ENCODE measurements at regions of chrX and their contacts with region 1.

Region 1: GRCh38 chrX:40083120-40083978 is 14.4 kb downstream of the BCOR start:
- DNase-seq: no peak
- ATAC-seq: peak; percentile 37
- H3K4me3 ChIP-seq: peak overlapping the region; percentile 3 to 16; a peak in 1 of 4 replicates
- H3K27ac ChIP-seq: no peak overlapping the region
- H3K4me1 ChIP-seq: peaks cover 42% of the 10 kb centered on the region
- H3K27me3 ChIP-seq: no peaks in the 10 kb centered on the region
- CTCF ChIP-seq: no peak

Region 2: GRCh38 chrX:38552721-38553120 is 1530.6 kb before region 1 on chrX:
- CTCF ChIA-PET with region 1: no interaction called
- POLR2A ChIA-PET with region 1: no interaction called
- in situ Hi-C with region 1: no loop called
- intact Hi-C with region 1: no loop called
- DNase-seq: no peak
- ATAC-seq: no peak
- H3K4me3 ChIP-seq: no peak overlapping the region
- H3K27ac ChIP-seq: no peak overlapping the region
- H3K4me1 ChIP-seq: no peaks in the 10 kb centered on the region
- H3K27me3 ChIP-seq: no peaks in the 10 kb centered on the region
- CTCF ChIP-seq: no peak

Region 3: GRCh38 chrX:38578167-38578566 is 1505.2 kb before region 1 on chrX:
- CTCF ChIA-PET with region 1: no interaction called
- POLR2A ChIA-PET with region 1: no interaction called
- in situ Hi-C with region 1: no loop called
- intact Hi-C with region 1: no loop called
- DNase-seq: no peak
- ATAC-seq: no peak
- H3K4me3 ChIP-seq: no peak overlapping the region
- H3K27ac ChIP-seq: no peak overlapping the region
- H3K4me1 ChIP-seq: no peaks in the 10 kb centered on the region
- H3K27me3 ChIP-seq: no peaks in the 10 kb centered on the region
- CTCF ChIP-seq: no peak

Region 4: DNA sequence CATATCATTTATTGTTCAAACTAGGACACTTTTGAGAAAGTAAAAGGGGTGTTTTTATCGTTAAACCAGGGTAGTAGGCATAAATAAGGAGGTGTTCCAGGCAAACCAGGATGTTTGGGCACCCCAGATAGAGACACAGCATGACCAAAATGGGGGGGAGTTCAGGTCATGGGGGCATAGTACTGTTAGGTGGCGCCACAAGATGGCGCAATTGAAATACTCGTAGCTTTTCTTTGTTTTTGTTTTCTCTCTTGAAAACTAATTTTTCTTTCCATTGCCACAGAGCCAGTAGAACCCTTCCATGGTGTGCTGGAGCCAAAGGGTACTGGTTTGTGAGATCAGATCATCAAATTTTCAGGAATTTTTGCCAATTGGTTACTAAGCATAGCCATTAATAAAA is 269.0 kb before region 1 on chrX:
- CTCF ChIA-PET with region 1: no interaction called
- POLR2A ChIA-PET with region 1: no interaction called
- in situ Hi-C with region 1: no loop called
- intact Hi-C with region 1: loop called (anchors 10 kb)
- DNase-seq: no peak
- ATAC-seq: no peak
- H3K4me3 ChIP-seq: no peak overlapping the region
- H3K27ac ChIP-seq: no peak overlapping the region
- H3K4me1 ChIP-seq: no peaks in the 10 kb centered on the region
- H3K27me3 ChIP-seq: no peaks in the 10 kb centered on the region
- CTCF ChIP-seq: peak; percentile 62

Region 5: GRCh38 chrX:39921838-39922237 is 161.5 kb before region 1 on chrX:
- CTCF ChIA-PET with region 1: no interaction called
- POLR2A ChIA-PET with region 1: no interaction called
- in situ Hi-C with region 1: no loop called
- intact Hi-C with region 1: no loop called
- DNase-seq: no peak
- ATAC-seq: no peak
- H3K4me3 ChIP-seq: no peak overlapping the region
- H3K27ac ChIP-seq: no peak overlapping the region
- H3K4me1 ChIP-seq: no peaks in the 10 kb centered on the region
- H3K27me3 ChIP-seq: no peaks in the 10 kb centered on the region
- CTCF ChIP-seq: no peak

Region 6: GRCh38 chrX:40013266-40014195 is 69.8 kb before region 1 on chrX:
- CTCF ChIA-PET with region 1: no interaction called
- POLR2A ChIA-PET with region 1: no interaction called
- in situ Hi-C with region 1: no loop called
- intact Hi-C with region 1: loop called (anchors 5 kb)
- DNase-seq: no peak
- ATAC-seq: peak; percentile 37
- H3K4me3 ChIP-seq: peak overlapping the region; percentile 42 to 52
- H3K27ac ChIP-seq: peak overlapping the region; percentile 61
- H3K4me1 ChIP-seq: peaks cover 3% of the 10 kb centered on the region
- H3K27me3 ChIP-seq: no peaks in the 10 kb centered on the region
- CTCF ChIP-seq: no peak

Region 7: GRCh38 chrX:40061871-40062524 is 21.4 kb before region 1 on chrX:
- CTCF ChIA-PET with region 1: no interaction called
- POLR2A ChIA-PET with region 1: interaction called, 10 read pairs
- in situ Hi-C with region 1: no loop called
- intact Hi-C with region 1: no loop called
- DNase-seq: no peak
- ATAC-seq: no peak
- H3K4me3 ChIP-seq: no peak overlapping the region
- H3K27ac ChIP-seq: no peak overlapping the region
- H3K4me1 ChIP-seq: peaks cover under 1% of the 10 kb centered on the region; the same call in 1 of the 2 replicates
- H3K27me3 ChIP-seq: no peaks in the 10 kb centered on the region
- CTCF ChIP-seq: no peak

Measured in Panc1 (cell line).